GM23248 (cell line): ENCODE measurements at regions of chr10 and their contacts with region 1.

Region 1: DNA sequence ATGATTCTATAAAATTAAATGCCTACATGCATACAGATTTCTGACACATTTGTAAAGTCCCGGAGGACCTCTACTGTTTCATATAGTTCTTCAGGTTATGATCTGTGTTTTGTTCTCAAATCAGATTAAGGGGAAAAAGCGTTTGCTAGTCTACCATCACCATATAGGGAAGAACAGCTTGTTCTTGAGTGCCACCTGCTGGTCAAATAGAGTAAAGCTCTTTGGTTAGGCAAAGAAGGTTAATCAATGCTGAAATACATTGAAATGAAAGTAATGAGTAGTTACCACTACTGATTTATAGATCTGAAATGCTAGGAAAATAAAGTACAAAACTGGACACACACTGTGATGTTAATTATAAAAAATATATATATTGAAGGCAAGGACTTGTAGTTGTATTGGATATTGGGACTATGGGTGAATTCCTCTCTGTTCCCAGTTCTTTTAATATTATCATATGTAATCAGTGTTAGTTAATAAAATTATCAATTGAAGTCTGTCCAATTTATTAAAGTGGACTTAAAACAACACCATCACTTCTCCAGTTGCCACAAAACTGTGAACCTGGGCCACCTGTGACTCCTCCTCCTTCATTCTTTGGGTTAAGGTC is 72.6 kb upstream of the PDLIM1 start:
- DNase-seq: peak; percentile 65
- H3K4me3 ChIP-seq: no peak overlapping the region
- H3K27ac ChIP-seq: no peak overlapping the region
- H3K4me1 ChIP-seq: no peaks in the 10 kb centered on the region
- H3K27me3 ChIP-seq: no peaks in the 10 kb centered on the region

Region 2: GRCh38 chr10:95031656-95032055 is 331.8 kb before region 1 on chr10:
- in situ Hi-C with region 1: no loop called
- DNase-seq: no peak
- H3K4me3 ChIP-seq: no peak overlapping the region
- H3K27ac ChIP-seq: no peak overlapping the region
- H3K4me1 ChIP-seq: no peaks in the 10 kb centered on the region
- H3K27me3 ChIP-seq: no peaks in the 10 kb centered on the region

Region 3: GRCh38 chr10:95208702-95209391 is 154.6 kb before region 1 on chr10:
- in situ Hi-C with region 1: loop called (anchors 10 kb)
- DNase-seq: peak; percentile 33
- H3K4me3 ChIP-seq: no peak overlapping the region
- H3K27ac ChIP-seq: no peak overlapping the region
- H3K4me1 ChIP-seq: peaks cover 8% of the 10 kb centered on the region
- H3K27me3 ChIP-seq: no peaks in the 10 kb centered on the region

Region 4: DNA sequence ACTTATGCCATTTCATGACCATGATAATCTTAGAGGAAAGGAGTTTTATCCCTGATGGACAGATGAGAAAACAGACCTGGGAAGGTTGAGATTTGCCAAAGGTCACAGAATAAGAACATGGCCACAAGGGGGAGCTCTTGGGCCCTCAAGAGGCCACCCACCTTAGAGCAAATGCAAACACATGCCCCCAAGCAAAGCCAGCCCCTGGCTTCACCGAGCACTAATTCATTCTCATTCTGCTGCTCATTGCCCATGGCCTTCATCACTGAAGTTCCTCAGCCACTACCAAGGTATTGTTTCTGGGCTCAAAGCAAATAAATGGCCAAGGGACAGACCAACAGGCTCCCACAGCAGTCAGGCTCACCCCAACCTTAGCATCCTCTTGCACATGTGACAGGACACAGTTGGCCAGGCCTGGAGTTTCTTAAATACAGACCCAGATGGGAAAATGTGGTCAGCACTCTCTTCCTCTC is 116.8 kb before region 1 on chr10:
- in situ Hi-C with region 1: loop called (anchors 5 kb)
- DNase-seq: peak; percentile 88
- H3K4me3 ChIP-seq: peak overlapping the region; percentile 14; the same call in 1 of the 2 replicates
- H3K27ac ChIP-seq: peak overlapping the region; percentile 65
- H3K4me1 ChIP-seq: peaks cover 19% of the 10 kb centered on the region
- H3K27me3 ChIP-seq: no peaks in the 10 kb centered on the region